H1 (cell line): ENCODE measurements at regions of chr19 and their contacts with region 1.

Region 1: GRCh38 chr19:37506387-37507166 is at the start of gene ZNF793:
- DNase-seq: peak; percentile 68 to 95
- H3K4me3 ChIP-seq: peak within 1 kb of the TSS; percentile 72 to 95 (median 86)
- H3K27ac ChIP-seq: peak within 1 kb of the TSS; percentile 98
- H3K4me1 ChIP-seq: peaks cover 4 to 6% (median 4%) of the 10 kb centered on the region in 4 experiments; a peak in 4 of 7 replicates
- H3K27me3 ChIP-seq: no peaks in the 10 kb centered on the region
- CTCF ChIP-seq: no peak
- EP300 ChIP-seq: no peak
- POLR2A ChIP-seq: peak; percentile 76 to 85
- RAD21 ChIP-seq: no peak
- total RNA-seq, gene ZNF793: 11.6 and 13.3 TPM in 2 replicates

Region 2: DNA sequence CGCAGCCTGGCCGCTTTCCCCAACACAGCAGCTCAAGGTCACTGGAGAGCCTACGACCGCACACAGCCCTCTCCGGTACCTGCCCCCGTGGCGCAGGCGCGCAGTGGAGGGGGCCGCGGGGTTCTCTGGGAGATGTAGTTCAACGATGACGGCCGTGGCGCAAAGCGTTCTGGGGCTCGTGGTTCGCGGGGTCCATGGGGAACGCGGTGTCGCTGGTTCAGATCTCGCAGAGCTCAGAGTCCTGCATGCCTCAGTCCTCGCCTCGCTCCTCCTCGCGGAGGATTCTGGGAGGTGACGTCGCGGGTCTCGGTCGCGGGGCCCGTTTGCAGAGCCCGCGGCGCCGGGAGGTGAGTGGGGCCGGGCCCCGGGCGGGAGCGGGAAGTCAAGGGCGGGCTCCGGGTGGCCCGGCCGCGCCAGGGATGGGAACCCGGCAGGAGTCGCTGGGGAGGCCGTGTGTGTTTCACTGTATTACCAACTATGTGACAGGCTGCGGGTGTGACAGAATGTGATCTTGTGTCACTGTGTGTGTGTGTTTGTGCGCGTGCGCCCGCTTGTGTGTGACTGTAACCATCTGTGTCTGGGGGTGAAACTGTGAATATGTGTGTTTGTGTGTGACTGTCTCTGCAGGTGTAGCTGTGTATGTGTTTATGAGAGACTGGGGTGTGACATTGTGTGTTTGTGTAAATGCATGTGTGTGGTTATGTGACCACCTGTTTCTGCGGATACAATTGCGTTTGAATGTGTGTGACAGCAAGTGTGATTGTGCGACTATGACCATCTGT is 135.5 kb before region 1 on chr19 and contains the start of gene ZNF527:
- CTCF ChIA-PET with region 1: no interaction called
- POLR2A ChIA-PET with region 1: interaction called, 19 read pairs
- DNase-seq: peak; percentile 89 to 93
- H3K4me3 ChIP-seq: peak within 1 kb of the TSS; percentile 65 to 85 (median 74)
- H3K27ac ChIP-seq: 0 out of 2 replicates have a peak within 1 kb of the TSS, but pooled peaks have one; percentile 41
- H3K4me1 ChIP-seq: peaks cover 0 to 5% (median 0%) of the 10 kb centered on the region in 4 experiments; a peak in 3 of 7 replicates
- H3K27me3 ChIP-seq: no peaks in the 10 kb centered on the region
- CTCF ChIP-seq: no peak
- EP300 ChIP-seq: peak in 1 of 2 experiments; percentile 44; a peak in 1 of 3 replicates
- POLR2A ChIP-seq: peak; percentile 21 to 74
- RAD21 ChIP-seq: peak in 1 of 2 experiments; percentile 0; a peak in 1 of 4 replicates
- total RNA-seq, gene ZNF527: 3.7 and 4.5 TPM in 2 replicates

Region 3: DNA sequence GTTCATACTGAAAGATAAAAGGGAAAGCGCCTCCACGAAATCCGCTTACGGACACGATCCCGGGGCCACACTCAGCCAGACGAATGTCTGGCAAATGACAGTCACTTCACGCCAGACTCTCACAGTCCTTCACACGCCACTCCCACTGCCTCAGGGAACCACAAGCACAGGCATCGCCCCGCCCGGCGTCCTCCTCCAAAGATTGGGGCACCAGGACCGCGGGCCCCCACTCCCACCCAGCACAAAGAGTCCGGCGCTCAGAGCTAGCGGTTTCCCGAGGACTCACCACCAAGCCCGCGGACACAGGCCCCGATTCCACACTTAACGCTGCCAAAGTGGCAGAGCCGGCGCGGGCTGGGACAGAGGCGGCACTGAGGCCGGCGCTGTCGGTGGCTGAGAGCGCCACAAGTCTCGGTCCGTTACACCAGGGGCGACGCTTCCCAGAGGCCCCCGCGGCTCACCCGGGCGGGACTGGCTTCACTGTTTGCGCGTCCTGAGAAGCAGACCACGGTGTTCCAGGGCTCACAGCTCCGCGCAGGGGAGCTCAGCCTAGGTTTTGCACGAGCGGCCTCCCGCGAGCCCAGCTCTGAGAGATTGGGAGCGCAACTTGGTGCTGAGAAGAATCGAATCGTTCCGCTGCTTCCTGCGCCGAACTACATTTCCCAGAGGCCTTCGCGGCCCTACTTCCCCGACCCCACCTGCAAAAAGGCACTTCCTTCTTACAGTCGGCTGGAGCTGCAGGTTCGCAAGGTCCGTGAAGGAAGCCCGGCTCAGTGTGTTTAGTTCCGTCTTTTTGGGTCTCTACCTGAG is 39.6 kb before region 1 on chr19 and contains the start of gene ZNF569:
- CTCF ChIA-PET with region 1: no interaction called
- POLR2A ChIA-PET with region 1: interaction called, 47 read pairs
- DNase-seq: peak; percentile 76 to 86
- H3K4me3 ChIP-seq: peak within 1 kb of the TSS; percentile 68 to 97 (median 89)
- H3K27ac ChIP-seq: no peak within 1 kb of the TSS
- H3K4me1 ChIP-seq: peaks cover 0 to 5% (median under 1%) of the 10 kb centered on the region in 4 experiments; a peak in 1 of 7 replicates
- H3K27me3 ChIP-seq: no peaks in the 10 kb centered on the region
- CTCF ChIP-seq: peak in 1 of 3 experiments; percentile 14; a peak in 1 of 4 replicates
- EP300 ChIP-seq: no peak
- POLR2A ChIP-seq: peak in 1 of 2 experiments; percentile 46; a peak in 2 of 3 replicates
- RAD21 ChIP-seq: no peak
- total RNA-seq, gene ZNF569: 10.2 and 10.5 TPM in 2 replicates

Region 4: DNA sequence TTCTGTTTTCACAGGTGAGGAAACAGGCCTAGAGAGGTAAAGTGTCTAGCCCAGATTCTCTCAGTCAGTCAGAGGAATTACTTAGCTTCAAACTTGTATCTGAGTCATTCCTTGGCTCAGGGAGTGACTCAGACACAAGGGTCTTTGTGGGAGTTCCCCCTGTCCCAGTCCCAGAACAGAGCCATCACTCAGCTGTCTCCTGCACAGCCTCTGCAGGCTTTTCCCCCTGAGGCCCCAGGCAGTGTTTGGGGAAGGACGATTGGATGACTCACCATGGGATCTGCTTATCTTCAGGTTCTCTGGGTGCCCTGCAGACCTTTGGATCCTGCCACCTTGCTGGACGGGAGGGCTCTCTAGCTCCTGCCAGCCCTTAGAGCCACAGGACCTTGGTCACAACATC is 13.3 kb after region 1 on chr19:
- CTCF ChIA-PET with region 1: no interaction called
- POLR2A ChIA-PET with region 1: interaction called, 13 read pairs
- DNase-seq: no peak
- H3K4me3 ChIP-seq: no peak overlapping the region
- H3K27ac ChIP-seq: no peak overlapping the region
- H3K4me1 ChIP-seq: no peaks in the 10 kb centered on the region
- H3K27me3 ChIP-seq: no peaks in the 10 kb centered on the region
- CTCF ChIP-seq: no peak
- EP300 ChIP-seq: no peak
- POLR2A ChIP-seq: no peak
- RAD21 ChIP-seq: no peak

Region 5: GRCh38 chr19:37537391-37537947 is 30.9 kb after region 1 on chr19:
- CTCF ChIA-PET with region 1: no interaction called
- POLR2A ChIA-PET with region 1: interaction called, 10 read pairs
- DNase-seq: no peak
- H3K4me3 ChIP-seq: no peak overlapping the region
- H3K27ac ChIP-seq: no peak overlapping the region
- H3K4me1 ChIP-seq: no peaks in the 10 kb centered on the region
- H3K27me3 ChIP-seq: no peaks in the 10 kb centered on the region
- CTCF ChIP-seq: no peak
- EP300 ChIP-seq: no peak
- POLR2A ChIP-seq: no peak
- RAD21 ChIP-seq: no peak

Region 6: DNA sequence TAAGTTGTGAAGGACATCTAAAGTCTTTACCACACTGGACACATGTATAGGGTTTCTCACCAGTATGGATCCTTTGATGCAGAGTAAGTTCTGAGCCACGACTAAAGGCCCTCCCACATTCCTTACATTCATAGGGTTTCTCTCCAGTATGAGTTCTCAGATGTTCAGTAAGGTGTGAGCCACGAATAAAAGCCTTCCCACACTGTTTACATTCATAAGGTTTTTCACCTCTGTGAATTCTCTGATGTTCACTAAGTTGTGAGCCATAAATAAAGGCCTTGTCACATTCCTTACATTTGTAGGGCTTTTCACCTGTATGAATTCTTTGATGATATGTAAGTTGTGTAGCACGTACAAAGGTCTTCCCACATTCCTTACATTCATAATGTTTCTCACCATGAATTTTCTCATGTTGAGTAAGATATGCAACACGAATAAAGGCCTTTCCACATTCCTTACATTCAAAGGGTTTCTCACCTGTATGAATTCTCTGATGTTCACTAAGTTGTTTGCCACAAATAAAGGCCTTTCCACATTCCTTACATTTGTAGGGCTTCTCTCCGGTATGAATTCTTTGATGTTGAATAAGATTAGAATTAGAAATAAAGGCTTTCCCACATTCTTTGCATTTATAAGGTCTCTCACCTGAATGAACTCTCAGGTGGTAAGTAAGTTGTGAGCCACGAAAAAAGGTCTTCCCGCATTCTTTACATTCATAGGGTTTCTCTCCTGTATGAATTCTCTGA is 58.2 kb after region 1 on chr19:
- CTCF ChIA-PET with region 1: no interaction called
- POLR2A ChIA-PET with region 1: no interaction called
- DNase-seq: no peak
- H3K4me3 ChIP-seq: peak overlapping the region in 1 of 4 experiments; percentile 12; a peak in 2 of 8 replicates
- H3K27ac ChIP-seq: no peak overlapping the region
- H3K4me1 ChIP-seq: no peaks in the 10 kb centered on the region
- H3K27me3 ChIP-seq: no peaks in the 10 kb centered on the region
- CTCF ChIP-seq: no peak
- EP300 ChIP-seq: no peak
- POLR2A ChIP-seq: no peak
- RAD21 ChIP-seq: no peak

Region 7: GRCh38 chr19:37594304-37594981 is 87.9 kb after region 1 on chr19 and contains the starts of genes ZNF540 and ZNF571:
- CTCF ChIA-PET with region 1: no interaction called
- POLR2A ChIA-PET with region 1: interaction called, 18 read pairs
- DNase-seq: peak; percentile 89 to 90
- H3K4me3 ChIP-seq: peak within 1 kb of the TSS; percentile 64 to 82 (median 76)
- H3K27ac ChIP-seq: peak within 1 kb of the TSS; percentile 78
- H3K4me1 ChIP-seq: peaks cover 0 to 2% (median 0%) of the 10 kb centered on the region in 4 experiments; a peak in 4 of 7 replicates
- H3K27me3 ChIP-seq: peaks cover 0 to 4% (median 0%) of the 10 kb centered on the region in 4 experiments; a peak in 1 of 7 replicates
- CTCF ChIP-seq: no peak
- EP300 ChIP-seq: 0 out of 3 replicates have a peak, but pooled peaks of 1 of the 2 experiments have one; percentile 4
- POLR2A ChIP-seq: peak in 1 of 2 experiments; percentile 79; a peak in 2 of 3 replicates
- RAD21 ChIP-seq: peak in 1 of 2 experiments; percentile 1; a peak in 1 of 4 replicates
- total RNA-seq, gene ZNF540: 0.17 and 0.21 TPM in 2 replicates
- total RNA-seq, gene ZNF571: 3.9 and 6.4 TPM in 2 replicates